Calu3 (cell line): ENCODE measurements at regions of chr7 and their contacts with region 1.

Region 1: DNA sequence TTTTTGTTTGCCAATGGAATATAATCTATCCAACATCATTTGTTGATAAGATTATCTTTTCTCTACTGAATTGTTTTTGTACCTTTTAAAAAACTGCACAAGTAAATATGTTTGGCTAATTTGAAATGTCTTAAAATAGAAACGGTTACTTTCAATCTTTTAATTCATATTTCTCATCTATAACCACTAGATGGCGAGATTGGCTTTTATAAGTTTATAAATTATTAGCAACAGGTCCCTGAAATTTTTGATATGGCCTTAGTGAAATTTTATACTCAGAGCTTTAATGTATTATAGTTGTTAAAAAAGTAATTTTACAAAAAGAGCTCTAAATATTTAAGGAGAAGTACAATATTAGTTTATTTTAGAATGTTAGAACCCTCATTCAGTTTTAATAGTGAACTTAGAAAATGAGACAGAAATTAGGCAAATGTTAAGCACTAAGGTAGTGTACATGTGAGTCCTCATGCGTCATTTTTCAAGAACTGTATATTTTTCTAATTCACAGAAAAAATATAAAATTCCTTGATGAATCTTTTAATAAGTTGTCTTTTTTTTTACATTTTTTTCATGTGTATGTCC is 592.5 kb downstream of the ARL4A start:
- DNase-seq: no peak
- H3K4me3 Mint-ChIP-seq: no peak overlapping the region
- H3K27ac Mint-ChIP-seq: no peak overlapping the region
- H3K4me1 Mint-ChIP-seq: no peaks in the 10 kb centered on the region
- H3K27me3 Mint-ChIP-seq: no peaks in the 10 kb centered on the region
- CTCF ChIP-seq: peak; percentile 59

Region 2: GRCh38 chr7:13352677-13353076 is 72.7 kb after region 1 on chr7:
- CTCF ChIA-PET with region 1: no interaction called
- intact Hi-C with region 1: no loop called
- DNase-seq: no peak
- H3K4me3 Mint-ChIP-seq: no peak overlapping the region
- H3K27ac Mint-ChIP-seq: no peak overlapping the region
- H3K4me1 Mint-ChIP-seq: no peaks in the 10 kb centered on the region
- H3K27me3 Mint-ChIP-seq: no peaks in the 10 kb centered on the region
- CTCF ChIP-seq: no peak

Region 3: DNA sequence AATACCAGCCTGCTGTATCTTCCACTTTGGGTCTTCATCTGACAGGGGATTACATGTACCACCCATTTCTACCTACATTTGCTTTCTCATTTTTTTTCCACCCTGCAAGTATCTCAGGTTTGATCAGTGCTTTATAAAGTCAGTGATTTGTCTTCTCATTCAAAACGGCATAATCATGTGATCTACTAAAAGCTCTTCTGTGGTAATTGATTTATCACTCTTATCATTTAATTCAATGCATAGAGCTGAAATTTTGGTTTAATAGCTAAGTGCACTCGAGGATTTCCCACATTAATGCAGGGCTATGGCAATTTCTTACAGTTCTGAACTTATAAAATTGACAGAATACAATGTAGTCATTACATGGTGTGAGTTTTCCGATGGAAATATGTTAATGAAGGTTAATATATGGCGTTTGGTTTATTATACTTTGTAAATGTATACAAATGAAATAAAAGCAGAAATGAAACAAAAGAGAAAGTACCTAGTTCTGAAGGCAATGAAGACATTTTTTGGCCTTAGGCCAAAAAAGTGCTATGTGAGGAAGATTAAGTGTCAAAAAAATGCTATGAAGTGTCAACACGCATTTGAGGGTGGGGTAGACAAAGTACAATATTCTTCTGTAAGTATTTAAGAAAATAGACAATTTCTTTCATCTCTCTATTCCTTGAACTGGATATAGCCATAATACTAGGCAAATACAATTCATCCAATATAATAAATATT is 252.2 kb after region 1 on chr7:
- CTCF ChIA-PET with region 1: no interaction called
- intact Hi-C with region 1: loop called (anchors 5 kb)
- DNase-seq: no peak
- H3K4me3 Mint-ChIP-seq: no peak overlapping the region
- H3K27ac Mint-ChIP-seq: no peak overlapping the region
- H3K4me1 Mint-ChIP-seq: no peaks in the 10 kb centered on the region
- H3K27me3 Mint-ChIP-seq: no peaks in the 10 kb centered on the region
- CTCF ChIP-seq: no peak

Region 4: DNA sequence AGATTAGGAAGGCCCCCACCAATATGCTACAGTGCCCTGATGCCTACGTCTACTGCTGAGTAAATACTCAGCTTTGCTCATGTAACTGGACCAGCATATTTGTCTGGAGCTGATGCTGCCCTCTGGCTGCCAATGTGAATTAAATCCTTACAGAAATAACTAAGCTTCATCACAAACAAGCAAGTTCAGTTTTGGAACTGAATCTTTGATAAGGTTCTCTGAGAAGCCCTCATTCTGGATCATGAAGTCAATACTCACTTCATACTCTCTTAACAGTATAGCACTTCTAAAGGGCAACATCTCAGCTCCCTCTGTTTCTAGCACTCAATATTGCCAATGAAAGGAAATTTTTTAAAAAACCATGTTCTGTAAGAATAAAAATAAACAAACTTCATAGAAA is 462.9 kb after region 1 on chr7:
- CTCF ChIA-PET with region 1: interaction called, 26 read pairs
- intact Hi-C with region 1: loop called (anchors 1 kb)
- DNase-seq: peak; percentile 41
- H3K4me3 Mint-ChIP-seq: no peak overlapping the region
- H3K27ac Mint-ChIP-seq: no peak overlapping the region
- H3K4me1 Mint-ChIP-seq: peaks cover 10% of the 10 kb centered on the region
- H3K27me3 Mint-ChIP-seq: no peaks in the 10 kb centered on the region
- CTCF ChIP-seq: peak; percentile 46

Region 5: DNA sequence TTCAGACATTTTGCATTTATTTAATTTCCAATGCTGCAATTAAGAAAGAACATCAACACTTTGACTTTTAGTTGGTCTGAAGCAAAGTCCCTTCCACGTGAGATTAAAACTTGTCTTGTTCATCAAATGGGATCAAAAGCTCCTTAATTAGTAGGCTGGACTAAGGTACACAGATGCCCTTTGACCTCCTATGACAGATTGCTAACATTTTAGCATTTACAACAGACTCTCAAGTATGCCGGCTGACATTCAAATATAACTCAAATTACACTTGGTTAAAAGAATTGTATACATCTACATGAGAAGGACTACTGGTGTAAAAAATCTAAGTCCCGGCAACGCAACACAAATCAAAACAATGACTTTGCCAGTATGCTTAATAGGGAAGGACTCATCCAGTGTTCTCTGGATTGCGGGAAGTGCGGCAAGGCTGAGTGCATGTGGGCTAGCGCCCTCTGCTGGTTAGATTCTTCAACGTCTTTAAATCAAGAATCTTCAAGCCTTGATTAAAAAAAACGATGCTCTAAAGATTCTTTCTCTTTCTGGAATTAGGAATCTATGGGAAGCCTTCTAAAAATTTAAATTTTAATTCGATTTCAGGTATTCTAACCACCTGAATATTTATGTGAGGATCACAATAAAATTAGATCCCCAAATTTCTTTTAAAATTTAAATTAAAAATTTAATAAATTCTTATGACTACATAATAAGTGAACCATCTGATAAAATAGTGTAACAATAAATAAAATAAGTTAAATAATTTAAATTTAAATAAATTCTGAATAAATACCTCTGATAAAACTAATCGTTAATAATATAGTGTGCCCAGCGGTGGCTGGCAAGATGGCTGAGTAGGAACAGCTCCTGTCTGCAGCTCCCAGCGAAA is 1177.9 kb after region 1 on chr7:
- CTCF ChIA-PET with region 1: interaction called, 3 read pairs
- intact Hi-C with region 1: loop called (anchors 1 kb)
- DNase-seq: peak; percentile 84
- H3K4me3 Mint-ChIP-seq: peak overlapping the region; percentile 39
- H3K27ac Mint-ChIP-seq: no peak overlapping the region
- H3K4me1 Mint-ChIP-seq: no peaks in the 10 kb centered on the region
- H3K27me3 Mint-ChIP-seq: no peaks in the 10 kb centered on the region
- CTCF ChIP-seq: peak; percentile 91

Region 6: GRCh38 chr7:15015545-15016326 is 1735.8 kb after region 1 on chr7:
- CTCF ChIA-PET with region 1: interaction called, 3 read pairs
- intact Hi-C with region 1: loop called (anchors 5 kb)
- DNase-seq: peak; percentile 76
- H3K4me3 Mint-ChIP-seq: peak overlapping the region; percentile 39
- H3K27ac Mint-ChIP-seq: peak overlapping the region; percentile 27
- H3K4me1 Mint-ChIP-seq: peaks cover 17% of the 10 kb centered on the region
- H3K27me3 Mint-ChIP-seq: no peaks in the 10 kb centered on the region
- CTCF ChIP-seq: peak; percentile 75